Activated CD4-positive, alpha-beta memory T cell treated with anti-CD3 and anti-CD28 coated beads, Interleukin-2, amount 10 ng/mL, durations not matched to agents 7 days and 5 days (primary cell): ENCODE measurements at regions of chr5 and their contacts with region 1.

Region 1: GRCh38 chr5:140639148-140639979 is at the start of gene TMCO6:
- DNase-seq: peak; percentile 97
- H3K4me3 Mint-ChIP-seq: peak within 1 kb of the TSS; percentile 97
- H3K27ac Mint-ChIP-seq: peak within 1 kb of the TSS; percentile 89
- H3K4me1 Mint-ChIP-seq: peaks cover 48% of the 10 kb centered on the region
- H3K27me3 Mint-ChIP-seq: no peaks in the 10 kb centered on the region
- total RNA-seq, gene TMCO6: 28.9 to 29.0 TPM

Region 2: GRCh38 chr5:140524003-140524402 is 115.4 kb before region 1 on chr5:
- CTCF ChIA-PET with region 1: no interaction called
- POLR2A ChIA-PET with region 1: no interaction called
- DNase-seq: no peak
- H3K4me3 Mint-ChIP-seq: no peak overlapping the region
- H3K27ac Mint-ChIP-seq: no peak overlapping the region
- H3K4me1 Mint-ChIP-seq: no peaks in the 10 kb centered on the region
- H3K27me3 Mint-ChIP-seq: no peaks in the 10 kb centered on the region

Region 3: GRCh38 chr5:140557136-140557805 is 82.1 kb before region 1 on chr5 and contains the start of gene SRA1:
- CTCF ChIA-PET with region 1: interaction called, 5 read pairs
- POLR2A ChIA-PET with region 1: interaction called, 10 read pairs
- DNase-seq: peak; percentile 91
- H3K4me3 Mint-ChIP-seq: peak within 1 kb of the TSS; percentile 83
- H3K27ac Mint-ChIP-seq: peak within 1 kb of the TSS; percentile 79
- H3K4me1 Mint-ChIP-seq: peaks cover 50% of the 10 kb centered on the region
- H3K27me3 Mint-ChIP-seq: no peaks in the 10 kb centered on the region
- total RNA-seq, gene SRA1: 37.4 to 38.3 TPM

Region 4: DNA sequence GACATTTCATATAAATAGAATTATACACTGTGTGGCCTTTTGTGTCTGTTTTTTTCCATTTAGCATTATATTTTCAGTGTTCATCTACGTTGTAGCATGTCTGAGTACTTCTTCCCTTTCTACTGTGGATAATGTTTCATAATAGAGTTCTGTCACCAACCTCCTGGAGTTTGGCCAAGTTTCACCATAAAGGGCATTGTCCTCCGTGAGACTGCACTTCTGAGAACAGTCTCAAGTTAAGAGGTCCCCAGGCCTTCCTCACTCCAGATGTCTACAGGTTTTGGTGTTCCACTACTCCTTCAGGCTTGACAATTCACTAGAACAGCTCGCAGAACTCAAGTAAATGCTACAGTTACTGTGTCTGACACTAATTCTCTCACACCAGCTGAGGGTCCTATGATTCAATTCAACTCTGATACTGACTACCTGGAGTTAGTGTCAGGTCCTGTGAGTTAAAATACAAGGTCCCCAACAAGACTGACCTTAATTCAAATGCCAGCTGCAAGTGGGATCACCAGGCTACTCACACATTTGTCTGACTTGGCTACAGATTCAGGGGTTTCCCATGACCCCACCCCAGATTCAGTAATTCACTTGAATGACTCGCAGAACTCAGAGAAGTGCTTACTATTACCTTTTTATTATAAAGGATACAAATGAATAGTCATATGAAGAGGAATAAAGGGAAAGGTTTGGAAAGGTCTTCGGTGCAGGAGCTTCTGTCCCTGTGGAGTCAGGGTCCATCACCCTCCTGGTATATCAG is 43.6 kb before region 1 on chr5:
- CTCF ChIA-PET with region 1: no interaction called
- POLR2A ChIA-PET with region 1: no interaction called
- DNase-seq: no peak
- H3K4me3 Mint-ChIP-seq: no peak overlapping the region
- H3K27ac Mint-ChIP-seq: no peak overlapping the region
- H3K4me1 Mint-ChIP-seq: no peaks in the 10 kb centered on the region
- H3K27me3 Mint-ChIP-seq: peaks cover 7% of the 10 kb centered on the region

Region 5: GRCh38 chr5:140916349-140916748 is 277.0 kb after region 1 on chr5:
- CTCF ChIA-PET with region 1: no interaction called
- POLR2A ChIA-PET with region 1: no interaction called
- DNase-seq: no peak
- H3K4me3 Mint-ChIP-seq: no peak overlapping the region
- H3K27ac Mint-ChIP-seq: no peak overlapping the region
- H3K4me1 Mint-ChIP-seq: no peaks in the 10 kb centered on the region
- H3K27me3 Mint-ChIP-seq: no peaks in the 10 kb centered on the region

Region 6: GRCh38 chr5:141017943-141018342 is 378.6 kb after region 1 on chr5:
- CTCF ChIA-PET with region 1: no interaction called
- POLR2A ChIA-PET with region 1: no interaction called
- DNase-seq: no peak
- H3K4me3 Mint-ChIP-seq: no peak overlapping the region
- H3K27ac Mint-ChIP-seq: no peak overlapping the region
- H3K4me1 Mint-ChIP-seq: no peaks in the 10 kb centered on the region
- H3K27me3 Mint-ChIP-seq: no peaks in the 10 kb centered on the region